ENCODE measurements at regions of chr10 and their contacts with region 1.

Region 1: GRCh38 chr10:97612386-97612785 is 20.9 kb downstream of the MORN4 start:
- DNase-seq: no peak
- H3K4me3 ChIP-seq: no peak overlapping the region
- H3K27ac ChIP-seq: no peak overlapping the region
- H3K4me1 ChIP-seq: peaks cover 4 to 22% (median 15%) of the 10 kb centered on the region in 4 donors
- H3K27me3 ChIP-seq: no peaks in the 10 kb centered on the region
- CTCF ChIP-seq: peak; percentile 49 to 81 (median 63)
- EP300 ChIP-seq: no peak
- POLR2A ChIP-seq: no peak

Region 2: DNA sequence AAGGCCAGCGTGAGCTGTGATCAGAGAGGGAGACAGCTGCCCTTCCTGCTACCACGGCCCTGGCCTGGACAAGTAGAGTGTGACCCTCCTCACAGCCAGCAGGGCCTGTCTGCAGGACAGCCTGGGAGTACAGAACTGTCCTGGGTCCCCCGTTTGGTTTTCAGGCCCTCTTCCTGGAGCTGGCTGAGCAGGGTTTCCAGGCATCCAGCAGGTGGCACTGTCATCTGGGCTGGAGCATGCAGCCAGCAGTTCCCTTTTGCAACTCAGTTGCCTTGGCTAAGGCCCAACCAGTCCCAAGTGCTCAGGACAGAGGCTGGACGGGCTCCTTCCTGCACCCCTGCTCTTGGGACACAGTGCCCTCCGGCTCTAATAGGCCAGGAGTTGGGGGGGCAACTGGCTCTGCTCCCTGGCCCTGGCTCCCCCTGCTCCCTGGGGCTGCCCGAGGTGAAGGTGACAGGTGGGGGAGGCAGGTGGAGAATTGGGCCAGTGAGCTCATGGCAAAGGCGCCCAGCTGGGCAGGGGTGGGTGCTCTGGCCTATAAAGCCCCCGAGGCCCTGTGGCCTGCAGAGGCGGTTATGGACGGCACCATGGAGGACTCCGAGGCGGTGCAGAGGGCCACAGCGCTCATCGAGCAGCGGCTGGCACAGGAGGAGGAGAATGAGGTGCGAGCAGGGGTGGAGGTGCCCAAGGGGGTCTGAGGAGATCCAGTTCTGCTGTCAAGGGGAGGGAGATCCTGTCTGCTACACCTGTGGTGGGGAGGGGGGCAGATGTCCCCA is 40.0 kb before region 1 on chr10 and contains the start of gene ANKRD2:
- intact Hi-C with region 1: loop called (anchors 1 kb)
- DNase-seq: no peak
- H3K4me3 ChIP-seq: no peak within 1 kb of the TSS
- H3K27ac ChIP-seq: peak within 1 kb of the TSS; percentile 19 to 72 (median 48)
- H3K4me1 ChIP-seq: peaks cover 30 to 36% (median 31%) of the 10 kb centered on the region in 4 donors
- H3K27me3 ChIP-seq: no peaks in the 10 kb centered on the region
- CTCF ChIP-seq: peak in 2 of 3 experiments; percentile 87 to 90
- EP300 ChIP-seq: no peak
- POLR2A ChIP-seq: no peak
- total RNA-seq, gene ANKRD2: 0.33 to 1.6 (median 1.2) TPM in 3 of 4 donors, not detected in the other

Measured in esophagus muscularis mucosa (tissue), 4 donors.